Activated B cell treated with CpG ODN at 0.5 μM for 24 hours (primary cell): ENCODE measurements at regions of chr1 and their contacts with region 1.

Region 1: DNA sequence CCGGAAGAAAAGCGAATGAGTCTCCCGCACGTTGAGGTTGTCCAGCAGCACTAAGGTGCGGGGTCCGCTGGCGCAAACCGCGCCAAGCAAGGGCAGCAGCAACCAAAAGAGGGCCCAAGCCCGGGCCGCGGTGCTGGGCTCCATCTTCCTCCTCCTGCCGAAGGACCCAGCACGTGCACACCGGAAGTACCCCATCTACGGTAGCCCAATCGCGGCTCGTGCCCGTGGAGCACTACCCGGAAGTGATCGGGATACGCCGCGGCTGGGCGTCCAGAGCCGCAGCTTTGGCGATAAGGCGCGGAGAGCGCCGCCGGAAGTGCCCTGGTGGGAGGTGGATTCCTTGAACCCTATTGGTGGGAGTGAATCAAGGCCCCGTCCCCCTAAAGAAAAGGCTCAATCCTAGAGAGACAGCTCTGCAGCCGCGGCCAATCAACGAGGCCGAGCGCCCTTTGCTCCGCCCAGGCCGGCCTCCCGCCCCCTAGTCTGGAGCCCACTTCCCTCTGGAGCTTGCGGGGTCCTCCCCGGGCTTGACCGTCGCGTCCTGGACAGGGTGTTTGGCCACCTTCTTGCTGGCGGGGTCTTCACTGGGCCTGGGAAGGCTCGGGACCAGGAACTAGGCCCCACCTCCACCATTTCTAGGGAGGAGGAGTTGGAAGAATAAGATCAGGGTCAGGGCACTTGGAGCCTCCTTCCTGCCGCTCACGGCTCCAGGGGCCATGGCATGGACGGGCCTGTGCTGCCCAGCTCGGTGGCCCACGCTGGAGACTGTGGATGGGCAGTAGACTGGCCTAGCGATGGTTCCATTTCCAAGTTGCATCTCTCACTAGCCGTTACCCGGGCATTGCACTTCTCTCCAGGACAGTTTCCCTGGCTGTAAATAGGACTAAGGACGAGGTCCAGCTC is at the start of gene DDOST:
- DNase-seq: peak; percentile 83
- ATAC-seq: peak; percentile 95
- H3K4me3 Mint-ChIP-seq: peak within 1 kb of the TSS; percentile 99
- H3K27ac Mint-ChIP-seq: peak within 1 kb of the TSS; percentile 98
- H3K4me1 Mint-ChIP-seq: peaks cover 33% of the 10 kb centered on the region
- H3K27me3 Mint-ChIP-seq: no peaks in the 10 kb centered on the region
- CTCF ChIP-seq: no peak
- total RNA-seq, gene DDOST: 132 TPM in 2 replicates

Region 2: DNA sequence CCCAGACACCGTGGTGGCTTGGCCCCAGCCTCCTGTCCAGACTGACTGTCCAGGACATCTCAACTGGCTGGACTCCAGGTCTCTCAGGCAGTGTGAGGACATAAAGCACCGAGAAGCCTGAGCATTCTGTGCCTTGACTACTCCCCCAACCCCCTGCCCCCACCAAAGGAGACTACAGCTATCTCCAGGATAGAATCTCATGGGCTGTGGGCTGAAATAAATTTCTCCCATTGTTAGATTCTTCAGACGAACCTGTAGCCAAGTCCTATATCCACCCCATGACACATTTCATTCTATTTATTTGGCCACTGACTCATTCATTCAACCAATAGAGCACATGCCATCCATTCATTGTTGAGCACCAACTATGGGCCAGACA is 359.4 kb before region 1 on chr1:
- CTCF ChIA-PET with region 1: no interaction called
- POLR2A ChIA-PET with region 1: no interaction called
- intact Hi-C with region 1: no loop called
- DNase-seq: no peak
- ATAC-seq: no peak
- H3K4me3 Mint-ChIP-seq: no peak overlapping the region
- H3K27ac Mint-ChIP-seq: no peak overlapping the region
- H3K4me1 Mint-ChIP-seq: no peaks in the 10 kb centered on the region
- H3K27me3 Mint-ChIP-seq: peaks cover 11% of the 10 kb centered on the region
- CTCF ChIP-seq: no peak

Region 3: DNA sequence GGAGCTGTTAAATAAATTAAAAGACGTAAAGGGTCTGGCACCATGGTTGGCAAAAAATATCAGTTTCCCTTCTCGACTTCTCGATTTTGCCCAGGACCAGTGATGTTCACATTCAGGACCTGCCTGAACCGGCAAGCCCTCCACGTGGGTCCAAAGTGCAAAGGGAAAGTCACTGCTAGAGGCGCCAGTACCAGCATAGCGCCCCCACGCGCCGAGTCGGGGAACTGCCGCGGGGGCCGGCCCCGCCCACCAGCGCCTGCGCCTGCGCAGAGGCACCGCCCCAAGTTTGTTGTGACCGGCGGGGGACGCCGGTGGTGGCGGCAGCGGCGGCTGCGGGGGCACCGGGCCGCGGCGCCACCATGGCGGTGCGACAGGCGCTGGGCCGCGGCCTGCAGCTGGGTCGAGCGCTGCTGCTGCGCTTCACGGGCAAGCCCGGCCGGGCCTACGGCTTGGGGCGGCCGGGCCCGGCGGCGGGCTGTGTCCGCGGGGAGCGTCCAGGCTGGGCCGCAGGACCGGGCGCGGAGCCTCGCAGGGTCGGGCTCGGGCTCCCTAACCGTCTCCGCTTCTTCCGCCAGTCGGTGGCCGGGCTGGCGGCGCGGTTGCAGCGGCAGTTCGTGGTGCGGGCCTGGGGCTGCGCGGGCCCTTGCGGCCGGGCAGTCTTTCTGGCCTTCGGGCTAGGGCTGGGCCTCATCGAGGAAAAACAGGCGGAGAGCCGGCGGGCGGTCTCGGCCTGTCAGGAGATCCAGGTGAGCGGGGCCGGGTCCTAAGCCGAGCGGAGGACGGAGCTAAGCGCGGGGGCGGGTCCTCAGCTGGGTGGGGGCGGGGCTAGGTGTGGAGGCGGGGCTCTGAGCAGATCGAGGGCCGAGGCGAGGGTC is 28.0 kb before region 1 on chr1 and contains the start of gene PINK1:
- CTCF ChIA-PET with region 1: interaction called, 4 read pairs
- POLR2A ChIA-PET with region 1: interaction called, 17 read pairs
- intact Hi-C with region 1: loop called (anchors 1 kb)
- DNase-seq: peak; percentile 92
- ATAC-seq: peak; percentile 94
- H3K4me3 Mint-ChIP-seq: peak within 1 kb of the TSS; percentile 88
- H3K27ac Mint-ChIP-seq: peak within 1 kb of the TSS; percentile 80
- H3K4me1 Mint-ChIP-seq: peaks cover 12% of the 10 kb centered on the region
- H3K27me3 Mint-ChIP-seq: no peaks in the 10 kb centered on the region
- CTCF ChIP-seq: peak; percentile 94
- total RNA-seq, gene PINK1: 3.4 and 4.2 TPM in 2 replicates